Activated CD8-positive, alpha-beta memory T cell treated with anti-CD3 and anti-CD28 coated beads, Interleukin-2, amount 10 ng/mL, durations not matched to agents 7 days and 5 days (primary cell): ENCODE measurements at regions of chr17 and their contacts with region 1.

Region 1: DNA sequence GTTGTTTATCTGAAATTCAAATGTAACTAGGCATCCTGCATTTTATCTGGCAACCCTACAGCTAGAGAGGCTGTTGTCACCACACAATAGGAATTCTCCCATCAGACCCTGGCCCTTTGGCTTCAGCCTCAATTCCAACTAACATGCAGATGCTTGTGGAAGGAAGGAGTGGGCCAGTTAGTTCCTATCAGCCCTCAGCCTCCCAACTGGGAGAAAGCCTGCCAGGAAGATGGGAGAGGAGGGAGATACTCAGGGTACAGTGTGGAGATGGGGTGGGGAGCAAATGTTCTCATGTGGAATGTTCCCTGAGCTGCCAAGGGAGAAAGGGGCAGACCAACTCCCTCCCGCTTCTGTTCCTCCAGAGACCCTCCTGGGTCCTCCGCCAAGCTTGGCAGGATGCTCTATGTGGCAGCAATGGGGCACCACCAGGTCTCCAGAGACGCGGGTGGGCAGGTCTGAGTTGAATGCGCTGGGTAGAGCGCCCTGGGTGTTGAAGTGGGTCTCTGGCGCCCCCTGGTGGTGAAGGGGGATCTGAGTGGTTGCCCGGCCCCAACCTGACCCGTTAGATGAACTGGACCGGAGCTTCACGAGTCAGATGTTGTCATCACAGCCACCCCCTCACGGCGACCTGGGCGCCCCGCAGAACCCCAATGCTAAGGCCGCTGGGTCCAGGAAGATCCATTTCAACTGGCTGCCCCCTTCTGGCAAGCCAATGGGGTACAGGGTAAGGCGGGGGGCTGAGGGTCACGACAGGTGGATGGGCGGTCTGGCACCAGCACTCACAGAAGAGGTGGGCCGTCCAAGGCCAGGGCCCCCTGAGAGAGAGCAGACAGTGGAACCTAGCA is 15.2 kb downstream of the GALK1 start:
- DNase-seq: peak; percentile 89
- ATAC-seq: peak; percentile 73
- H3K4me3 Mint-ChIP-seq: no peak overlapping the region
- H3K27ac Mint-ChIP-seq: no peak overlapping the region
- H3K4me1 Mint-ChIP-seq: peaks cover 18% of the 10 kb centered on the region
- H3K27me3 Mint-ChIP-seq: peaks cover 6% of the 10 kb centered on the region

Region 2: DNA sequence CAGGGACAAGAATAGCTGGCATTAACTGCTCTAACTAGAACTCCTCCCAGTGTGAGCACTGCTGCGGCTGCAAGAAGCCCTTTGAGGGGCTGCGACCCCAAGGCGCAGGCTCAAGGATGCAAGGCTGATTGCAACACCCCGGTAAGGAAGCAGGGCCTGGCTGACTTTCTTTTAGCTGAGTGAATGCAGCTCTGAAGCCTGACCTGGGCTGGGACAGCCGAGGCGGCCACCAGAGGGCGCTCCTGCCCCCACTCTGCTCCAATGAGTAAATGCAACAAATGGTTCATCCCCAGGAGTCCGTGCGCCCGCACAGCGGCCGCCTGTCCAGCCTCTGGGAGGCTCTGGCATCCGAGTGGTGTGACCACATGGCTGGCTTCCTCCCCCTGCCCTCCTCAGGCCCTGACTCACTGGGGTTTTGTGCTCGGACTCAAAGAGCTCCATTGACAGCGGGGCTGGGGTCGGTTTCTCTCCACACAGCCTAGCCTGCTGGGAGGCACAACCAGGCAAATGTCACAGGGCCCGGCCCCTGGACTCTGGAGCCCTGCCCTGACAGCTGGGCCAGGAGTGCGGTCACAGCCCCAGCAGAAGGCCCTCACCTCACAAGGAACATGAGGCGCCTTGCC is 116.8 kb before region 1 on chr17 and contains the start of gene SMIM5:
- CTCF ChIA-PET with region 1: interaction called, 218 read pairs
- DNase-seq: peak; percentile 87
- ATAC-seq: peak; percentile 90
- H3K4me3 Mint-ChIP-seq: no peak within 1 kb of the TSS
- H3K27ac Mint-ChIP-seq: peak within 1 kb of the TSS; percentile 9
- H3K4me1 Mint-ChIP-seq: no peaks in the 10 kb centered on the region
- H3K27me3 Mint-ChIP-seq: no peaks in the 10 kb centered on the region
- total RNA-seq, gene SMIM5: 0.15 TPM in 1 of 2 experiments, not detected in the other

Region 3: GRCh38 chr17:75667021-75667790 is 82.6 kb before region 1 on chr17 and contains the starts of genes RECQL5 and SAP30BP:
- CTCF ChIA-PET with region 1: interaction called, 428 read pairs
- DNase-seq: peak; percentile 99
- ATAC-seq: peak; percentile 100
- H3K4me3 Mint-ChIP-seq: no peak within 1 kb of the TSS
- H3K27ac Mint-ChIP-seq: peak within 1 kb of the TSS; percentile 64
- H3K4me1 Mint-ChIP-seq: peaks cover 22% of the 10 kb centered on the region
- H3K27me3 Mint-ChIP-seq: no peaks in the 10 kb centered on the region
- total RNA-seq, gene RECQL5: 35.5 to 46.2 TPM
- total RNA-seq, gene SAP30BP: 100.0 to 106 TPM

Region 4: DNA sequence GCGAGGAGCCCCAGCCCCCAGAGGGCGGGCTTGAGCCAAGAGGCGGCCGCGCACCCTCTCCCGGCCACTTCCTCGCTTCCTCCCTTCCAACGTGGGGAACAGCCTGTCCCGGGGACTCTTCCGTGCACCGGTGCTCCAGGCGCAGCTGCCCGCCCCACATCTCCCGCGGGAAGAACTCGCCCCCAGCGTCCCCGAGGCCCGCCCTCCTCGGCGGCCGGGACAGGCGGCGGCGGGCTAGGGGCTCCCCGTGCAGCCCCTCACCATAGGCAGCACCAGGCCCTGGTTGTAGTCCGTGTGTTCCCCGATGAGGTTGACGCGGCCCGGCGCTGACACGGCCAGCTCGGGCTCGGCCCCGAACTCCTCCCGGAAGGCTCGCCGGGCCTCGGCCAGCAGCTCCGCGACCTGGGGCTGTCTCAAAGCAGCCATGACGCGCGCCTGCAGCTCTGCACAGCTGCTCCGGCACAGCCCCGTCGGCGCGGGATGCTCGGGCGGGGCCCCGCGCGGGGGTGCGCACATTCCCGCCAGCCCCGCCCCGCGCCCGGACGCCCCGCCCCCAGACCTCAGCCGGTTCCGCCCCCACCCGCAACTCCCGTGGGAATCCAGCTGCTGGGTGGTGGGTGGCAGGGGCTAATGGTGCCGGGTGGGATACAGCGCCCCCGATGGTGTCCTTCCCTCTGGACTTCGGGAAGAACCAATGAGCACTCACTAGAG is 15.1 kb after region 1 on chr17 and contains the start of gene GALK1:
- CTCF ChIA-PET with region 1: interaction called, 87 read pairs
- DNase-seq: peak; percentile 85
- ATAC-seq: peak; percentile 94
- H3K4me3 Mint-ChIP-seq: peak within 1 kb of the TSS; percentile 76
- H3K27ac Mint-ChIP-seq: peak within 1 kb of the TSS; percentile 70
- H3K4me1 Mint-ChIP-seq: peaks cover 11% of the 10 kb centered on the region
- H3K27me3 Mint-ChIP-seq: no peaks in the 10 kb centered on the region
- total RNA-seq, gene GALK1: 46.1 to 53.7 TPM

Region 5: GRCh38 chr17:75827252-75828115 is 77.7 kb after region 1 on chr17:
- CTCF ChIA-PET with region 1: interaction called, 19 read pairs
- DNase-seq: peak; percentile 78
- ATAC-seq: peak; percentile 59
- H3K4me3 Mint-ChIP-seq: peak overlapping the region; percentile 8
- H3K27ac Mint-ChIP-seq: peak overlapping the region; percentile 90
- H3K4me1 Mint-ChIP-seq: peaks cover 17% of the 10 kb centered on the region
- H3K27me3 Mint-ChIP-seq: no peaks in the 10 kb centered on the region

Region 6: DNA sequence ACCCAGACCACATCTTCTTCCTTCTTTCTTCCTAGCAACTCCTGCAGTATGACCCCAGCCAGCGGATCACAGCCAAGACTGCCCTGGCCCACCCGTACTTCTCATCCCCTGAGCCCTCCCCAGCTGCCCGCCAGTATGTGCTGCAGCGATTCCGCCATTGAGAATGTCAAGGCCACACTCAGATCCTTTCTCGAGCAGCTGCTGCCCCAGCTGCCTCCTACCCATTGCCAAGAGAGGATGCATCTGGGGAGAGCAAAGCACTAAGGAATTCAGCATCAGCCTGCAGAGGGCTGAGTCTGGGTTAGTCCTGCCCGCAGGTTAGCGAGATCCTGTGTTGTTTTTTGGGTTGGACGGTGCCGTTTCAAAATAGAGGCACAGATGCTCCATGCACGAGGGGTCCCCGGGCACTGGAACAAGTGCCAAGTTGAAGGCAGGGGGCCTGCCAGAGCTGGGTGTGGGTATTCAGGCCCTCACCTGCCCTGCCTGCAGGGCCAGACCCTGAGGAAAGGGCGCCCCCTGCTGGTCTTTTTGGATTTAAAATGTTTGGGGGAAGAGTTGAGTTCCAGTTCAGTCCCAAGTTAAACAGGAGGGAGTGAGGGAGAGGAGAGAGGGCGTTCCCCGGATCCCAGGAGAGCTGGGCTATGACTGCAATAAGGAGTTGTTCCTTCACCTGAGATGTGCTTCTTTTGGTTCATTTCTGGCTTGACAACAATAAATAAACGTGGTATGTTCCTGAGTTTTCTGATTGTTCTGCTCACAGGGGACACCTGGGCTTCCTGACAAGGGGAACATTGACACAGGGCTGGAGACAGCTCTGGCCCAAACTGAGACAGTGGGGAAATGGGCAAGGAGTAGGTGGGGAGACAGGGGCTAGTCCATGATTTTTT is 255.7 kb after region 1 on chr17:
- CTCF ChIA-PET with region 1: interaction called, 10 read pairs
- DNase-seq: peak; percentile 88
- ATAC-seq: peak; percentile 75
- H3K4me3 Mint-ChIP-seq: no peak overlapping the region
- H3K27ac Mint-ChIP-seq: peak overlapping the region; percentile 14
- H3K4me1 Mint-ChIP-seq: no peaks in the 10 kb centered on the region
- H3K27me3 Mint-ChIP-seq: no peaks in the 10 kb centered on the region